ENCODE measurements at regions of chr19 and their contacts with region 1.

Region 1: DNA sequence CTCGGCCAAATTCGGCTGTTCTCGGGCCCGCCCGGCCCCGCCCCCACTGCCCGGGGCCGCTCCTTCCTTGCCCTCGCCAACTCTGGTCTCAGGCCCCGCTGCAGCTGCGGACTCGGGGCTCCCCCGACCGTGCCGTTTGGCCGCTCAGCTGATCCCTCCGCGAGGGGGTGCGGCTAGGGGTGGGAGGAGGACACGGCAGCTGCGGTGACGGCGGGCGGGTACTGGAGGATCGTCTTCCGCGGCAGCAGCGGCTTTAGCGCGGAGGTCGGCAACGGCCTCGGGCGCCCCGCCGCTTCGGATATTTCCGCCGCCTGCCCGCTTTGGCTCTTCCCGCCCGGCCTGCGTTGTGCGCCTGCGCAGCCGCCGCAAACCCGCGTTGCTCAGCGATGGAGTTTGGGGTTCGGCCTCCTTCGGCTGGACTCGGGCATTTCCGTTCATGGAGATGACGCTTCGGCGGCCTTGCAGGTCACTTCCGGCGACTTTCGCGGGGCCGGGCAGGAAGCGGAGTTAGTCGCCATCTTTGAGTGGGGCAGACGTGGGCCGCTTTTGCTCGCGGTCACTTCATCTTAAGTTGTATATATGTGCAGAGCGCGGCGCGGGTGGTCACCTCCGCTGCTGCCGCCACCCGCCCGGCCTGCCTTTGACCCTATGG is 338 bp upstream of the UBE2M start:
- DNase-seq: peak; percentile 98
- H3K4me3 ChIP-seq: peak overlapping the region; percentile 76 to 81
- H3K27ac ChIP-seq: peak overlapping the region; percentile 100
- H3K4me1 ChIP-seq: peaks cover 23% of the 10 kb centered on the region
- H3K27me3 ChIP-seq: no peaks in the 10 kb centered on the region
- CTCF ChIP-seq: no peak
- POLR2A ChIP-seq: peak; percentile 27

Region 2: GRCh38 chr19:58572818-58573657 is 14.3 kb after region 1 on chr19 and contains the start of gene MZF1:
- intact Hi-C with region 1: loop called (anchors 2 kb)
- DNase-seq: peak; percentile 100
- H3K4me3 ChIP-seq: peak within 1 kb of the TSS; percentile 47 to 75
- H3K27ac ChIP-seq: peak within 1 kb of the TSS; percentile 97 to 100
- H3K4me1 ChIP-seq: peaks cover 7% of the 10 kb centered on the region
- H3K27me3 ChIP-seq: no peaks in the 10 kb centered on the region
- CTCF ChIP-seq: peak in 2 of 4 experiments; percentile 27 to 45
- POLR2A ChIP-seq: peak; percentile 3
- total RNA-seq, gene MZF1: 47.5 to 67.3 TPM